Activated naive CD4-positive, alpha-beta T cell treated with anti-CD3 and anti-CD28 coated beads for 36 hours (primary cell): ENCODE measurements at regions of chr7 and their contacts with region 1.

Region 1: DNA sequence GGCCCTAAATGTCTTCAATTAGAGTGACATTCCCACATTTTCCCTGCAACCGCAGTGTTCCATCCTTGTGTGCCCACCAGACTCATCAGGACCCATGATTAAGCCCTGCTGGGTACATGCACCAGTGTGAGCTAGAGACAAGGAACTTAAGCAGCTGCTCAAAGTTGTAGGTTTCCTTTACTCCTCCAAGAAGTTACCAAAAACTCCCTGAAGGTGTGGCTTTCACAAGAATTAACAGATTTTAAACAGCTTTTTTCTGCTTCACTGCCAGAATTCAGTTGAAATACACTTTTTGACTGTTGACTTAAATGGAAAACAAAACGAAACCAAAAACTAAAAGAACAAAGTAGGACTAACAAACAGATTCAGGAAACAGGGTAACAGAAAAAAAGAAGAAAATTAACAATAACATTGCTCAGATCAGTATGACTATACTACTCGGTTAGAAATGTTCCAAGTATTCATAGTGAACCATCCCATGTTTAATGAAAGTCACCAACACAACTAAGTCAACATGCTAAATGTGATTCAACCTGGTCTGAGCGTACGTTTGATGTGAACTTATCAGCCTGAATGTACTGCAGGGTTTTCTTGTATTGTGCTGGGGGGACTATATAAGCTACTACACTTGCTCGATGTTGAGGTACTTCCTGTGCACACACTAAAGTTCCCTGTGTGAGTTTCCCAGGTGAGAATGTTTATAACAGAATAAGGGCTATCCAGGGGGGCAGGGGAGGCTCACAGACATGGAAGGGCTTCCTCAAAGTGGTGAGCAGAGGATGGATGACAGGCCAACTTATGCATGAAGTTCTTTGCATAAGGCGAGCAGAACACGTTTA is 22.2 kb downstream of the SLC37A3 start:
- DNase-seq: peak; percentile 59
- H3K4me3 Mint-ChIP-seq: peak overlapping the region; percentile 58
- H3K27ac Mint-ChIP-seq: peak overlapping the region; percentile 96
- H3K4me1 Mint-ChIP-seq: peaks cover 37% of the 10 kb centered on the region
- H3K27me3 Mint-ChIP-seq: no peaks in the 10 kb centered on the region

Region 2: GRCh38 chr7:140209866-140210609 is 166.1 kb before region 1 on chr7:
- CTCF ChIA-PET with region 1: no interaction called
- intact Hi-C with region 1: loop called (anchors 1 kb)
- DNase-seq: peak; percentile 87
- H3K4me3 Mint-ChIP-seq: peak overlapping the region; percentile 51
- H3K27ac Mint-ChIP-seq: peak overlapping the region; percentile 90
- H3K4me1 Mint-ChIP-seq: peaks cover 86% of the 10 kb centered on the region
- H3K27me3 Mint-ChIP-seq: no peaks in the 10 kb centered on the region

Region 3: GRCh38 chr7:140334341-140335057 is 41.6 kb before region 1 on chr7:
- CTCF ChIA-PET with region 1: no interaction called
- intact Hi-C with region 1: no loop called
- DNase-seq: no peak
- H3K4me3 Mint-ChIP-seq: no peak overlapping the region
- H3K27ac Mint-ChIP-seq: no peak overlapping the region
- H3K4me1 Mint-ChIP-seq: no peaks in the 10 kb centered on the region
- H3K27me3 Mint-ChIP-seq: no peaks in the 10 kb centered on the region

Region 4: DNA sequence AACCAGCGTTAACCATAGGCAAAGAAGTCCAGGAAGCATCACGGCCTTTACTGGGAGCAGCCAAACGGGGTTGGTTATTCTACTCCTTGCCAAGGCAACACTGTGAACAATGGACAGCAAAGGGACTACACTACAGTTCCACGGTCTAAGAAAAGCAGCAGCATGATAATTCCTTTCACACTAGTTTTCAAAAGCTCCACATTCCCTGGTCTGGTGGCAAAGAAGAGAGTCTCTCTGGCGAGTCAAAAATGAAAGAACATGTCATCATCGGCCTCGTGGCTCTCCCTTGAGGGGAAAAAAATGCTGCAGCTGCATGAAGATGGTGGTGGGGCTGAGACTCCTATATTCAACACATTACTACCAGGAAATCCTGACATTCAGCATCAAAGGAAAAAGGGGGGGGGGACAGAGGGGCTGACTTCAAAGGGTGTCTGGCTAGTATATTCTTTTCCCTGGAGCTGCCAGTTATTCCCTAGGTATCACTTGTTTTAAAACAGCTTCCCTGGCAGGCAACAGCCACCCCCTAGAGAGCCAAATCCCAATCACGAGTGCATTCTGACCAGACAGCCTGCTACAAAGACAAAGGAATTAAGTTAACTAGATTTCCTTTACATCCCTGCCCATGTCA is 26.9 kb before region 1 on chr7:
- CTCF ChIA-PET with region 1: no interaction called
- intact Hi-C with region 1: no loop called
- DNase-seq: no peak
- H3K4me3 Mint-ChIP-seq: no peak overlapping the region
- H3K27ac Mint-ChIP-seq: no peak overlapping the region
- H3K4me1 Mint-ChIP-seq: no peaks in the 10 kb centered on the region
- H3K27me3 Mint-ChIP-seq: no peaks in the 10 kb centered on the region

Region 5: GRCh38 chr7:140390466-140391190 is 14.5 kb after region 1 on chr7:
- CTCF ChIA-PET with region 1: interaction called, 4 read pairs
- intact Hi-C with region 1: loop called (anchors 1 kb)
- DNase-seq: peak; percentile 55
- H3K4me3 Mint-ChIP-seq: no peak overlapping the region
- H3K27ac Mint-ChIP-seq: no peak overlapping the region
- H3K4me1 Mint-ChIP-seq: peaks cover 1% of the 10 kb centered on the region
- H3K27me3 Mint-ChIP-seq: no peaks in the 10 kb centered on the region

Region 6: DNA sequence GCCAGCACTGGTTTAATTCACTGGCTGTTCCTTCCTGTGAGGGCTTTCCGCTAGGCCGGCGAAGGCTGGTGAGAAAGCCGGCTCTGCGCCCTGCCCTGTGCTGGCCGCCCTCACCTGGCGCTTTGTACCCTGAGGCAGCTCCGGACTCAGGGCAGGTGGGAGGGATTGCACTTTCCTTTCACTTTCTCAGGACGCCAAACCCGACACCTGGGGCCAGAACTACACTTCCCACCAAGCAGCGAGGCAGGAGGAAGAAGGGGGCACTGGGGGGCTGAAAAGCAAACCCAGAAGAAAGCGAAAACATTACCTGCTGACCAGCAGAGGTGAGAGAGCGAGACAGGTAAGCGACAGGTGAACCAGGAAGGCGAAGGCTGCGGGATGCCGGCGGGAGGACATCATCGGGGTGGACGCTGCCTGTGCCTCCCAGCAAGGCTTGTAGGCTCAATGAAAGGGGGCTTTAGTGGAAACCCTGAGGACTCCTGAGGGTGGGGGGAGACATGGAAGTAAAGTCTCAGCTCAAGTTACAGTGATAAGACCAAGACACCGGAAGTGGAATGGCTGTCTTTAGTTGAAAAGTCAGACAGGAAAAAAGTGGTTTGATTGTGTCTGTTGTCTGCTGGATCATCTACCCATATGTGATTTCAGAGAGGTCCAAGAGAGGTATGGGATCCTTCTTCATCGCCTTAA is 27.9 kb after region 1 on chr7 and contains the start of gene RAB19:
- CTCF ChIA-PET with region 1: interaction called, 3 read pairs
- intact Hi-C with region 1: loop called (anchors 1 kb)
- DNase-seq: peak; percentile 67
- H3K4me3 Mint-ChIP-seq: peak within 1 kb of the TSS; percentile 82
- H3K27ac Mint-ChIP-seq: peak within 1 kb of the TSS; percentile 86
- H3K4me1 Mint-ChIP-seq: peaks cover 27% of the 10 kb centered on the region
- H3K27me3 Mint-ChIP-seq: no peaks in the 10 kb centered on the region
- total RNA-seq, gene RAB19: 4.6 to 5.2 TPM

Region 7: GRCh38 chr7:141551094-141551781 is 1175.1 kb after region 1 on chr7 and contains the start of gene AGK:
- CTCF ChIA-PET with region 1: no interaction called
- intact Hi-C with region 1: loop called (anchors 10 kb)
- DNase-seq: peak; percentile 83
- H3K4me3 Mint-ChIP-seq: peak within 1 kb of the TSS; percentile 86
- H3K27ac Mint-ChIP-seq: peak within 1 kb of the TSS; percentile 85
- H3K4me1 Mint-ChIP-seq: peaks cover 36% of the 10 kb centered on the region
- H3K27me3 Mint-ChIP-seq: no peaks in the 10 kb centered on the region
- total RNA-seq, gene AGK: 35.8 to 37.9 TPM